Activated B cell treated with CpG ODN at 0.5 μM for 24 hours (primary cell): ENCODE measurements at regions of chr2 and their contacts with region 1.

Region 1: DNA sequence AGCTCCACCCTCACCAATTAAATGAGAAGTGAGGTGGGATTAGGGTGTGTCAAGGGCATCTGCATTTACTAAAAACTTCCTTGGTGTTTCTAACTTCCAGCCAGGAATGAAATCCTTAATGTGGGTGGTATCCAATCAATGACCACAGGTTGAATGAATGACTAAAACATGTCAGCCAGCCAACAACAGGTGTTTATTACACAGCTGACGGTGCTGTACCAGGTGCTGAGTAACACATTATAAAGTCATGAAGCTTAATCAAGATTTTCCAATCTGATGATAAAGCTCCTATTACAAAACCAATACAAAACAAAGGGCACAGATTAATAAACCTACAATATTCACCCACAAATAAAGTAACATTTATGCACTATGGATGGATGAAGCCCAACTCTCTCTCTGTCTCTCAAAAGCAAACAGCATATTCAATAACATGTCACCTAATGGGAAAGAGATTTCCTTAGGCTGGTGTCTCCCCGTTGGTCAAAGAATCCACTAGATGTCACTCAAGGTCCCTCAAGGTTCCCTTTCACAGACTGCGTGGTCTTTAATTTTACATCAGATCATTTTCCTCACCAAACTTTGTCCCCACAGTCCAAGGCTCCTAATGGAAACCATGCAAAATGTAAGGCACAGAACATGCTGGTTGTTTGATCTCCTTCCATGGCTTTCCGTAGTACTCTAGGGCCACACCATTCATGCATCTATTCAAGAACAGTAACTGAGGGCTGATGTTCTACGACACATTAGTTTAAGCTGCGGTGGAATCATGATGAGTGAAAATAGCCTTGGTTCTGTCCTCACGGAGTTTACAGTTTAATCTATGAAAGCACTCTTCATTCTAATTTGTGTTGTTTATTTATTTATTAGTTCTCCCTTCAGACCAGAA is 6.4 kb upstream of the PTPN4 start:
- DNase-seq: no peak
- ATAC-seq: peak; percentile 47
- H3K4me3 Mint-ChIP-seq: no peak overlapping the region
- H3K27ac Mint-ChIP-seq: no peak overlapping the region
- H3K4me1 Mint-ChIP-seq: no peaks in the 10 kb centered on the region
- H3K27me3 Mint-ChIP-seq: no peaks in the 10 kb centered on the region
- CTCF ChIP-seq: peak; percentile 42

Region 2: DNA sequence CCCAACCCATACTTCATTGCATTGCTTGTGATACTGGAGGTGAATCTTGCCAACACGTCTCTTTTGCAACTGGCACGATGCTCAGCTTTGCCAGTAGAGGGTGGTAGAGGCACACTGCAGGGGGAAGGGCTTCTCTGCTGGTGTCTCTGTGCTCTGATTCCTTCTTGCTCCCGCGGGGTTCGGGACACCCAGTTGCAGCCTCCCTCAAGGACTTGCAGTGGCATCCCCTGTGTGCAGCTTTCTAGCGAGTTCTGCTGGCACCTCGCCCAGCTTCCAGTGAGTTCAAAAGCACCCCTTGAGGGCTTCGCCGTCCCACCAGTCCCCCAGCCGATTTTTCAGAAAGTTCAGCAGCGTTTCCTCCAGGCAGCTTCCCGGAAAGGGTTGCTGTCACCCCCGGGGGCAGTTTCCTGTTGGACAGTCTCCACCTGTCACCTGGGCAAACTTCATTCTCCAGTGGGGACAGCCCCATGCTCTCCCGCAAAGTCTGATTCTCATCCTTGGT is 870.5 kb before region 1 on chr2:
- CTCF ChIA-PET with region 1: no interaction called
- POLR2A ChIA-PET with region 1: no interaction called
- intact Hi-C with region 1: no loop called
- DNase-seq: peak; percentile 24
- ATAC-seq: peak; percentile 85
- H3K4me3 Mint-ChIP-seq: peak overlapping the region; percentile 80
- H3K27ac Mint-ChIP-seq: no peak overlapping the region
- H3K4me1 Mint-ChIP-seq: peaks cover 8% of the 10 kb centered on the region
- H3K27me3 Mint-ChIP-seq: peaks cover 16% of the 10 kb centered on the region
- CTCF ChIP-seq: no peak

Region 3: DNA sequence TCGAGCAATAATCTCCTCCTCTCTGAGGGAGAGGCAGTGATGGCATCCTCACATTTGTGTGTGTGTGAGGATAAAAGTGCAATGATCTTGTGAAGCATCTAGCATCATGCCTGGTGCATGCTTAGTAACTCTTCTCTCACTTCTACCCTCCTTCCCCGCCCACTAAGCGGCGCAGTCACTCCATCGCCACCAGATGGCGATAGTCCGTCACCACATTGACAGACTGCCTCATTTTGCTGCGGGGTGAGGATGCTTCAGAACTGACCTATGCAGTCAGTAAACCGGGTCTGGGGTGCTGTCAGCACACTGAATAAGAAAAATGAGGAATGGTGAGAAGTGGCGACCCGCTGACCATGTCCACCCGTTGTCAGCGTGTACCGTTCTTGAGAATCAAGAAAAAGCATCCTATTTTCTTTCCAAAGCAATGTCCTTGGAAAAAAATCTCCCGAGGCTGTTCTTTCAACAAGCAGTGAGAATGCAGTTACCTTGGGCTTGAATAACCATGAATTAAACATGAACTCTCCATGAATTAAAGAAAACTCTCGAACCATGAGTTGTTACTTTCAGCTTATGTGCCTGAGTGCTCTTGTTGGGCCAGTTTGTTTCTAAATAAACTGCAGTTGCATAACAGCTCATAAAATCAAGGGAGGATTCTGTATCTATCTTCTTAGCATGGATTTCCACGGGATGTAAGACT is 111.6 kb before region 1 on chr2:
- CTCF ChIA-PET with region 1: interaction called, 11 read pairs
- POLR2A ChIA-PET with region 1: no interaction called
- intact Hi-C with region 1: no loop called
- DNase-seq: peak; percentile 55
- ATAC-seq: peak; percentile 100
- H3K4me3 Mint-ChIP-seq: no peak overlapping the region
- H3K27ac Mint-ChIP-seq: no peak overlapping the region
- H3K4me1 Mint-ChIP-seq: peaks cover 4% of the 10 kb centered on the region
- H3K27me3 Mint-ChIP-seq: peaks cover 10% of the 10 kb centered on the region
- CTCF ChIP-seq: peak; percentile 90

Region 4: DNA sequence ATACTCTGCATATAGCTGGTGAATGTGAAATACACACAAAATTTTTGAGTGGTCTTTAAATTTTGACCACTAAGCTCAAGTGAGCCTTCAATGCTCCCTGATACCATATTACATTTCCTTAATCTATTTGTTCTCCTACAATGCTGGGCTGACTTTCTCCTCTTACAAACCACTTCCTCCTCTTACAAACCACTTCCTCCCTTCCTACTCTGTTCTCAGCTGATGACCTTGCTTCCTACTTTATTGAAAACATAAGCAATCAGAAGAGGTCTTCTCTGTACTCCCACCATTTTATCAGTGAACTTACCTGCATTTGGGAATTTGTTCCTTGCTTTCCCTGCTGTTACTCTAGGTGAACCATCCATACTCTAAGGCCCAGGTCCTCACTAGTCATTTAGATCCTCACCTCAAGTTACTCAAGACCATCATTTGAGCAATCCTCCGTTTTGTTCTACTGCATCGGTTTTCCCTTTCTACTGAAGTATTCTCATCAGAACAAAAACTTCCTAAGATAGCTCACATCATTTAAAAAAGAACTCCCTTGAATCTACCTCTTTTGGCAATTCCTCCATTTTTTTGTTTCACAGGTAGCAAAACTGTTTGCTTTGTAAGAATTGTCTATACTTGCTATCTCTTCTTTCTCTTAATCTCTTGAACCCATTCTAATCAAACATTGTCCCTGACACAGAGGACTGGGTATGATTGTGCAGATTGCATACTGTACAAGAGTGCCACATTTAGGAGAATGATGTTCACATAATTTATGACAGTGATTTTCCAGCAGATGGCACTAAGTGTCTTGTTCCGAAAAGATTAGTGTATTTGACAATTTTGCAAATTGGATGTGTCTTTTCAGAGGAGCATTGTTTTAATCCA is 356.1 kb after region 1 on chr2:
- CTCF ChIA-PET with region 1: no interaction called
- POLR2A ChIA-PET with region 1: no interaction called
- intact Hi-C with region 1: loop called (anchors 2 kb)
- DNase-seq: no peak
- ATAC-seq: peak; percentile 57
- H3K4me3 Mint-ChIP-seq: peak overlapping the region; percentile 42
- H3K27ac Mint-ChIP-seq: peak overlapping the region; percentile 62
- H3K4me1 Mint-ChIP-seq: peaks cover 17% of the 10 kb centered on the region
- H3K27me3 Mint-ChIP-seq: no peaks in the 10 kb centered on the region
- CTCF ChIP-seq: no peak